OCI-LY7 (cell line): ENCODE measurements at regions of chr4 and their contacts with region 1.

Region 1: DNA sequence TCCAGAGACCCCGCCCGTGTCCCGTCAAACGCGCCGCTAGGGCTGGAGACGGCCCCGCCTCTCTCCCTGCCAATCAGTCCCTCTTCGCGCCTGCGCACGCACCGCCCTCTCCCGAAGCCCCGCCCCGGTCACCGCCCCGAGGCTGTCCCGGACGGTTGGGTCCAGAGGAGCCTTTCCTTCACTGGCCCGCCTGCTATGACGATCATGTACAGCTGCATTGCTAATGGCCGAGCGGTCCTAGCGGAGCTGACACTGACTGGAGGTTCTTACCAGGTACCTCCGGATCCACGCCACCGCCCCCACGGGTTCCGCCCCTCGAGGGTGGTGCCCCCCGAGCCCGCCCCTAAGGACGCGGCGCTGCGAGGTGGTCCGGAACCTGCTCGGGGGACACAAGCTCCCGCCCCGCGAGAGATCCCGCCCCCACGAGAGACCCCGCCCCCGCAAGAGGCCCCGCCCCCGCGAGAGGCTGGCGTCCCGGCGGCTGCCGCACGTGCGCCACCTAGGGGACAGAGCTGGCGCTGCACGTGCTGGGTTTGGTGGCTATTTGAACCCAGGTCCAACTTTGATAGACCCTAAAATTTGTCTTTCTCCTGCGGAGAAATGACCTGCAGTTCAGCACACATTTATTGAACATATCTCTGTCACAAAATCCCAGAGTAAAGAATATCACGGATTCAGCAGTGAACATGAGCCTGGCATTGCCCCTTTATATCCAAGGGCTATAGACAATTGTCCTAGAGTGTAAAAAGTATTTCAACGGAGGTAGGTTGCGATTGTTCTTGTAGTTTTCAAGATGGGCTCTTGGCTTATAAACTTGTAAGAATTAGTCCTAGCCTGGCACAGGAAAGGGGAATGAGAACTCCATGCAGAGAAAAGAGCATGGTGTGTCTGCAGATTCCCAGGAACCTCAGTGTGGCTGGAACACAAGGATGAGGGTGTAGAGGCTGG is 88.7 kb downstream of the HNRNPD start:
- DNase-seq: peak; percentile 99
- H3K4me3 ChIP-seq: peak overlapping the region; percentile 62
- H3K27ac ChIP-seq: peak overlapping the region; percentile 22
- H3K4me1 ChIP-seq: peaks cover 25% of the 10 kb centered on the region
- CTCF ChIP-seq: peak; percentile 89

Region 2: DNA sequence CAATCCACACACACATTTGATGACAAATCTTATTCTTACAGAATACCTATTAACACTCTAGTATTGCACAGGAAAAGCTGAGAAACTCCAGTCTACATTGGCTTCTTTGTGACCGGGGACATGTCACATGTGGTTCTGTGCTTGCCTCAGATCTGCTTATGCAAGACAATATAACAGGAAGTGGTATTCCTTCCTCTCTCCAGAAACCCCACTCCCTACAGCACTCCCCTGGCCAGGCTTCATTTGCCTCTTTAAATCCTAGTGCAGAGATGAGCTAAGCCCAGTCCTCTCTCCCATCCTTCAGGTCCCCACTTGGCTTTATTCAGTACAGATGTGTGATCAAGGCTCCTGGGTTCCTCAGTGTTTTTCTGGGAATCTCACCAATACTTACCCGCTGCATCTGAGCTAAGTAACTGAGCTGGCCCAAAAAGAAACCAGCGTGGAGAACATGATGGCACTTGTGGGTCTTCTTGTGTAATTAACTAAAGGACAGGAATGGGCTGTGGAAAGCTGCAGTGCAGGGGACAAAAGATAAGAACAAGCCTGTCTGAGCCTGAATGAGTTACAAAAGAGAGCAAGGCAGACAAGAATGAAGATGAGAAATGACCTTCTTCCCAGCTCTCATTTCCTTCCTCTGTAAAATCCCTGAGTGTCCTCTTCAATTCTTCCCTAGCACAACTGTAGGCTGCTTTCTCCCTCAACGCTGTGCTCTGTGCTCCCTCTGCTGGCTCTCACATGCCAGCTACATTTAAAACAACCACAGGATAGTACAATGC is 16.9 kb before region 1 on chr4:
- CTCF ChIA-PET with region 1: interaction called, 10 read pairs
- POLR2A ChIA-PET with region 1: interaction called, 6 read pairs
- intact Hi-C with region 1: no loop called
- DNase-seq: peak; percentile 66
- H3K4me3 ChIP-seq: no peak overlapping the region
- H3K27ac ChIP-seq: no peak overlapping the region
- H3K4me1 ChIP-seq: peaks cover 18% of the 10 kb centered on the region
- CTCF ChIP-seq: peak; percentile 94

Region 3: DNA sequence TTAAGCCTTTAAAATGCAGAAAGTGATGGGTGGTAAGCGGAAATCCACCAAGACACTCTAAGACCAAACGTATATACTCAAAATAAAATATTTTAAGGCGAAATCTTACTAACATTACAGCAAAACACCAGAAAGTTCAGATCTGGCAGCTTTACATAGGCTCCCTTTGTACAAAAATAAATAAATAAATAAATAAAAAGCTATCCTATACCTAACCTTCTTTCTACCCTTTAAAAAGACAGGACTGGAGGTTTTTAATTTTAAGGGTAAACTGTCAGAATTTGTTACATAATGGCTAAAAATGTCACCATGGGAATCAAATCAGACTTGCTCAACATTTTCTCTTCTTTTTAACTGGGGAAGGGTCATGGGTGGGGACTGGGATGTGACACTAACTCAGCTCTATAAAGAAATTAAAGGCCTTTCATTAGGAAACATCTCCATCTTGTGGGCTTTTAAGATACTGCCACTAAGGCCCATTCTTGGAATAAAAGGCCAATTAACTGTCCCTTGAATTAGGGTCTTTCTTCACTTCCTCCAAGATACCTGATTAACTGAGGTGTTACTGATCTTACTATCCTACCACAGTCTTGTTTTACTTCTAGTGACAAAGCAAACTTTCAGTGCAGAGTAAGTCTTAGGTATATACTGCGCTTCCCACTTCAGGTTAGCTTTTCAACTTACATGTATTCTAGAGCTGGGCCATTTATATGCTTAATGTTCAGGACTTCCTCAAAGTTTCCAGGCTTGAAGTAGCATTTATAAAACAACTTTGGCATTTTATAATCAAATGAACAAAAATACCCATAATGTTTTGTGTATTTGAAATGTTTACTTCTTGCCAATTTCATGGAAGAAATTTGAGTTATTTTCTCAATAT is 75.4 kb after region 1 on chr4:
- CTCF ChIA-PET with region 1: no interaction called
- POLR2A ChIA-PET with region 1: no interaction called
- intact Hi-C with region 1: loop called (anchors 2 kb)
- DNase-seq: peak; percentile 50
- H3K4me3 ChIP-seq: no peak overlapping the region
- H3K27ac ChIP-seq: peak overlapping the region; percentile 6
- H3K4me1 ChIP-seq: peaks cover 47% of the 10 kb centered on the region
- CTCF ChIP-seq: peak; percentile 86

Region 4: GRCh38 chr4:82818664-82819662 is 533.8 kb after region 1 on chr4:
- CTCF ChIA-PET with region 1: no interaction called
- POLR2A ChIA-PET with region 1: no interaction called
- intact Hi-C with region 1: no loop called
- DNase-seq: no peak
- H3K4me3 ChIP-seq: no peak overlapping the region
- H3K27ac ChIP-seq: no peak overlapping the region
- H3K4me1 ChIP-seq: no peaks in the 10 kb centered on the region
- CTCF ChIP-seq: no peak